Lower leg skin (tissue), 4 donors: ENCODE measurements at regions of chr1 and their contacts with region 1.

Region 1: GRCh38 chr1:85576642-85577418 is 3.7 kb upstream of the CCN1 start:
- DNase-seq: peak; percentile 78 to 97
- H3K4me3 ChIP-seq: peak overlapping the region; percentile 55
- CTCF ChIP-seq: no peak
- POLR2A ChIP-seq: no peak

Region 2: GRCh38 chr1:85307987-85308832 is 268.6 kb before region 1 on chr1:
- intact Hi-C with region 1: loop called (anchors 10 kb)
- DNase-seq: peak; percentile 78 to 98
- H3K4me3 ChIP-seq: no peak overlapping the region
- CTCF ChIP-seq: peak in 1 of 3 donors; percentile 87
- POLR2A ChIP-seq: no peak

Region 3: DNA sequence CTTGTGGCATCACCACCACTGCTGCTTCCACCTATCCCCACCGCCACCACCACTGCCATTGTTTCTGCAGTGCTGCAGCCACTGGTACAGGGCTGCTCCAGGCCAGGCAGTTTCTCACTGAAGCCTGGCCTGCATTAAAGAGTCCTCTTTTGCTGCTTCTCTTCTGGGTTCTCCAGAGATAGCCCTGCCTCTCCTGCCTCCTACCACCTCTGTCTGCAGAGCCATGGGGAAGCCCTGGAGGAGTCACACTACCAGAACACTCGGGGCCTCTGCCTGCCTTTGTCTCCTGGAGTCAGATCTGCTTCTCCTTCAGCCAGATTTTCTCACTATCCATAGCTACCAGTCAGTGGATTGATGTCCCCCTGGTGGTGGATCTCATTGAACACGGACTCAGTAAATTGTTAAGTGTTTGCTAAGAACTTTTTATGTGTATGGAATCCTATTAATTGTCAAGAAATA is 74.2 kb before region 1 on chr1:
- intact Hi-C with region 1: loop called (anchors 10 kb)
- DNase-seq: peak in 1 of 2 donors; percentile 50
- H3K4me3 ChIP-seq: no peak overlapping the region
- CTCF ChIP-seq: no peak
- POLR2A ChIP-seq: no peak

Region 4: GRCh38 chr1:85661767-85662166 is 84.9 kb after region 1 on chr1:
- intact Hi-C with region 1: no loop called
- DNase-seq: no peak
- H3K4me3 ChIP-seq: no peak overlapping the region
- CTCF ChIP-seq: no peak
- POLR2A ChIP-seq: no peak